Tibial artery (tissue), 4 donors: ENCODE measurements at regions of chr14 and their contacts with region 1.

Region 1: DNA sequence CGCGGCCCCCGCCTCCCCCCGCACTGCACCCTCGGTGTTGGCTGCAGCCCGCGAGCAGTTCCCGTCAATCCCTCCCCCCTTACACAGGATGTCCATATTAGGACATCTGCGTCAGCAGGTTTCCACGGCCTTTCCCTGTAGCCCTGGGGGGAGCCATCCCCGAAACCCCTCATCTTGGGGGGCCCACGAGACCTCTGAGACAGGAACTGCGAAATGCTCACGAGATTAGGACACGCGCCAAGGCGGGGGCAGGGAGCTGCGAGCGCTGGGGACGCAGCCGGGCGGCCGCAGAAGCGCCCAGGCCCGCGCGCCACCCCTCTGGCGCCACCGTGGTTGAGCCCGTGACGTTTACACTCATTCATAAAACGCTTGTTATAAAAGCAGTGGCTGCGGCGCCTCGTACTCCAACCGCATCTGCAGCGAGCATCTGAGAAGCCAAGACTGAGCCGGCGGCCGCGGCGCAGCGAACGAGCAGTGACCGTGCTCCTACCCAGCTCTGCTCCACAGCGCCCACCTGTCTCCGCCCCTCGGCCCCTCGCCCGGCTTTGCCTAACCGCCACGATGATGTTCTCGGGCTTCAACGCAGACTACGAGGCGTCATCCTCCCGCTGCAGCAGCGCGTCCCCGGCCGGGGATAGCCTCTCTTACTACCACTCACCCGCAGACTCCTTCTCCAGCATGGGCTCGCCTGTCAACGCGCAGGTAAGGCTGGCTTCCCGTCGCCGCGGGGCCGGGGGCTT is at the start of gene FOS:
- DNase-seq: peak; percentile 93 to 95
- H3K4me3 ChIP-seq: peak within 1 kb of the TSS; percentile 71 to 79
- H3K27ac ChIP-seq: peak within 1 kb of the TSS; percentile 97 to 100
- H3K4me1 ChIP-seq: peaks cover 0 to 49% (median 32%) of the 10 kb centered on the region in 4 donors
- H3K27me3 ChIP-seq: no peaks in the 10 kb centered on the region
- CTCF ChIP-seq: peak in 1 of 2 experiments; percentile 25

Region 2: GRCh38 chr14:74979442-74980361 is 298.9 kb before region 1 on chr14:
- intact Hi-C with region 1: loop called (anchors 5 kb)
- DNase-seq: peak; percentile 69 to 93
- H3K4me3 ChIP-seq: peak overlapping the region; percentile 47 to 49
- H3K27ac ChIP-seq: peak overlapping the region; percentile 80 to 94
- H3K4me1 ChIP-seq: peaks cover 5 to 91% (median 73%) of the 10 kb centered on the region in 4 donors
- H3K27me3 ChIP-seq: no peaks in the 10 kb centered on the region
- CTCF ChIP-seq: peak; percentile 23 to 34

Region 3: DNA sequence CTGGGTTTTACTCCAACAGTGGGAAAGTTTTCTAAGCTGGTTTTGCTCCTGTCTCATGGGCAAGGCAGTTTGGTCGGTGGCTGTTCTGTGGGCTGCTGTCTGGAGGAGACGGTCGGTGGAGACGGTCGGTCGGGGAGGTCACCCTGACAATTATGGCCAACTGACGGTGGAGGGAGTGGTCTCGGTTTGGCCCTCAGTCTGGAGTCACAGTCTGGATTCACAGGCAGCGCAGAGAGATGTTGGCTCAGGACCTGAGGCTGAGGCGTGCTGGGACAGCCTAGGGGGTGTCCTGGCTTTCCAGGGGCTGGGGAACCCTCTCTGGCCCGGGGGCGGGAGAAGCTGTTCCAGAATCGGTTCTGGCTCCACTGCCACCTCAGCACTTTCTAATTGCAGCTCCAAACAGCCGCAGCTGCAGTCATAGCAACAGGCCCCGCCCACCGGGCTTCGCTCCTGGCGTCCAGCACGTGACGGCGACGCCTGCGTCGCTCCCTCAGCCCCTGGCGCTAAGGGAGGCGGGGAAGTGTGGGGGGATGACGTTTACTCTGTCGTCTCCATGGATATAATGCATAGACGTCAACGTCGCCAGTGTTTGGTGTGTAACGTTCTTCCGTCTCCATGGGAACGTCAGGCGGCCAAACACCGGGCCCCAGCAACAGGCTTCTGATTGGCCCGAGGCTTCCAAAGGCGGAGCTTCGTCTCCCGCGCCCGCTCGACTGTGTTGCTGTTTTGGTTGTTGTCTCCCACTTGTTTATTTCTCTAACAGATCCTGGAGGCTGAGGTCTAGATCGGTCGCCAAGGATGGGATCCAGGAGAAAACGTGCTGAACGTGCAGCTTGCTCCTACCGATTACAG is 19.8 kb before region 1 on chr14:
- intact Hi-C with region 1: loop called (anchors 1 kb)
- DNase-seq: peak; percentile 97 to 99
- H3K4me3 ChIP-seq: peak overlapping the region; percentile 45 to 58
- H3K27ac ChIP-seq: peak overlapping the region; percentile 89 to 99
- H3K4me1 ChIP-seq: peaks cover 0 to 36% (median 34%) of the 10 kb centered on the region in 4 donors
- H3K27me3 ChIP-seq: no peaks in the 10 kb centered on the region
- CTCF ChIP-seq: no peak

Region 4: GRCh38 chr14:75476274-75476995 is 197.8 kb after region 1 on chr14:
- intact Hi-C with region 1: no loop called
- DNase-seq: peak in 1 of 2 donors; percentile 24
- H3K4me3 ChIP-seq: no peak overlapping the region
- H3K27ac ChIP-seq: no peak overlapping the region
- H3K4me1 ChIP-seq: no peaks in the 10 kb centered on the region
- H3K27me3 ChIP-seq: no peaks in the 10 kb centered on the region
- CTCF ChIP-seq: no peak